HepG2 (cell line): ENCODE measurements at regions of chr20 and their contacts with region 1.

Region 1: GRCh38 chr20:17504898-17505635 is 26.1 kb downstream of the BFSP1 start:
- DNase-seq: peak; percentile 64
- ATAC-seq: peak; percentile 86
- H3K4me3 ChIP-seq: peak overlapping the region; percentile 35 to 74 (median 51)
- H3K27ac ChIP-seq: no peak overlapping the region
- H3K4me1 ChIP-seq: peaks cover 19% of the 10 kb centered on the region
- H3K27me3 ChIP-seq: peaks cover 1 to 74% of the 10 kb centered on the region in 2 experiments; a peak in 4 of 5 replicates
- CTCF ChIP-seq: peak; percentile 79
- EP300 ChIP-seq: no peak
- POLR2A ChIP-seq: no peak
- RAD21 ChIP-seq: peak; percentile 69

Region 2: DNA sequence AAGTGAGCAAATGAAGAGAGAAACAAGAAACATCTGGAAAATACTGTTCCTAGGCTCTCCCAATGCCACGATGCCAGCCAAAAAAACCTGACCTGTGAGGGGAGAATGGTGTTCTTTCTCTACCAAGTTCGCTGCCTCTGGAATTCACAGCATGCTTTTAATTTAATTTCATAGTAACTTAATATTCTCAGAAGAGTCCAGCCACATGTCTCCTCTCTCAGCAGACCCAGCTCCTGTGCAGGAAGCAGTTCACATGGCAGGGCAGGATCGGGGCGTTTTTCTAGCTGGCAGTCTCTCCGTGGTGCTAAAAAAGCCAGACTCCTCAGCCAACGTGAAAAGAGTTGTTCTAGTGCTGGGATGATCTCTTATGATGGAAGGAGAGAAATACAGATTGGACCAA is 31.4 kb before region 1 on chr20:
- CTCF ChIA-PET with region 1: no interaction called
- POLR2A ChIA-PET with region 1: no interaction called
- in situ Hi-C with region 1: no loop called
- intact Hi-C with region 1: no loop called
- DNase-seq: no peak
- ATAC-seq: no peak
- H3K4me3 ChIP-seq: no peak overlapping the region
- H3K27ac ChIP-seq: no peak overlapping the region
- H3K4me1 ChIP-seq: no peaks in the 10 kb centered on the region
- H3K27me3 ChIP-seq: peaks cover 8 to 46% of the 10 kb centered on the region in 2 experiments; a peak in 4 of 5 replicates
- CTCF ChIP-seq: no peak
- EP300 ChIP-seq: no peak
- POLR2A ChIP-seq: no peak
- RAD21 ChIP-seq: no peak

Region 3: DNA sequence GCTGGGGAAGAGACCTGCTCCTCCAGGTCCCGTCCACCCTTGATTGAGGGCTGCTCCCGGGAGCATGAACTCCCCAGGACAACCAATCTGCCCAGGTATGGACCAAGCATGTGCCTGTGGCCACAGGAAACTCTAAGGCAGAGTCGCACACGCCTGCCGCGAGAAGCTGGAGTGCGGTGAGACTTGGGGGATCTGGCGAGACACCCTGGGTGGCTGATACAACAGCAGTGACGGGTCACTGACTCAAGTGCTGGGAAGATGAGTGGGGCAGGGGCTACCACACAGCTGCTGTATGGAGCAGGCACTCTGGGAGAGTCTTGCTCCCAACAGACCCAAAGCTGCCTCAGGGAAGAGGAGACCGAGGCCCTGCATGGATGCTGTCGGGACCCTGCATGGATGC is 14.0 kb before region 1 on chr20:
- CTCF ChIA-PET with region 1: no interaction called
- POLR2A ChIA-PET with region 1: no interaction called
- in situ Hi-C with region 1: no loop called
- intact Hi-C with region 1: no loop called
- DNase-seq: no peak
- ATAC-seq: peak; percentile 16; the same call in 1 of the 3 replicates
- H3K4me3 ChIP-seq: no peak overlapping the region
- H3K27ac ChIP-seq: no peak overlapping the region
- H3K4me1 ChIP-seq: no peaks in the 10 kb centered on the region
- H3K27me3 ChIP-seq: peaks cover 16 to 59% of the 10 kb centered on the region in 2 experiments
- CTCF ChIP-seq: no peak
- EP300 ChIP-seq: no peak
- POLR2A ChIP-seq: no peak
- RAD21 ChIP-seq: no peak

Region 4: GRCh38 chr20:17530716-17531664 is 25.9 kb after region 1 on chr20 and contains the start of gene BFSP1:
- CTCF ChIA-PET with region 1: interaction called, 13 read pairs
- POLR2A ChIA-PET with region 1: no interaction called
- in situ Hi-C with region 1: no loop called
- intact Hi-C with region 1: loop called (anchors 1 kb)
- DNase-seq: peak; percentile 55
- ATAC-seq: peak; percentile 91
- H3K4me3 ChIP-seq: peak within 1 kb of the TSS; percentile 41 to 67 (median 49)
- H3K27ac ChIP-seq: no peak within 1 kb of the TSS
- H3K4me1 ChIP-seq: peaks cover 27% of the 10 kb centered on the region
- H3K27me3 ChIP-seq: peaks cover 0 to 10% of the 10 kb centered on the region in 2 experiments; a peak in 2 of 5 replicates
- CTCF ChIP-seq: peak; percentile 20; the same call in 1 of the 2 replicates
- EP300 ChIP-seq: peak in 1 of 2 experiments; percentile 34; a peak in 1 of 4 replicates
- POLR2A ChIP-seq: peak in 1 of 2 experiments; percentile 36; a peak in 1 of 4 replicates
- RAD21 ChIP-seq: peak; percentile 37; the same call in 1 of the 2 replicates
- total RNA-seq, gene BFSP1: 0.22 and 0.36 TPM in 2 replicates

Region 5: GRCh38 chr20:17617551-17618223 is 112.6 kb after region 1 on chr20:
- CTCF ChIA-PET with region 1: interaction called, 6 read pairs
- POLR2A ChIA-PET with region 1: no interaction called
- in situ Hi-C with region 1: no loop called
- intact Hi-C with region 1: loop called (anchors 1 kb)
- DNase-seq: peak; percentile 42
- ATAC-seq: peak; percentile 35
- H3K4me3 ChIP-seq: no peak overlapping the region
- H3K27ac ChIP-seq: no peak overlapping the region
- H3K4me1 ChIP-seq: peaks cover 9% of the 10 kb centered on the region
- H3K27me3 ChIP-seq: no peaks in the 10 kb centered on the region
- CTCF ChIP-seq: peak; percentile 84
- EP300 ChIP-seq: no peak
- POLR2A ChIP-seq: no peak; a peak in 2 of 4 replicates
- RAD21 ChIP-seq: peak; percentile 77

Region 6: GRCh38 chr20:17655865-17656479 is 150.9 kb after region 1 on chr20:
- CTCF ChIA-PET with region 1: no interaction called
- POLR2A ChIA-PET with region 1: no interaction called
- in situ Hi-C with region 1: no loop called
- intact Hi-C with region 1: no loop called
- DNase-seq: no peak
- ATAC-seq: no peak
- H3K4me3 ChIP-seq: no peak overlapping the region
- H3K27ac ChIP-seq: no peak overlapping the region
- H3K4me1 ChIP-seq: peaks cover 7% of the 10 kb centered on the region
- H3K27me3 ChIP-seq: no peaks in the 10 kb centered on the region
- CTCF ChIP-seq: no peak
- EP300 ChIP-seq: no peak
- POLR2A ChIP-seq: 0 out of 4 replicates have a peak, but pooled peaks of 1 of the 2 experiments have one; percentile 20
- RAD21 ChIP-seq: no peak